ENCODE measurements at regions of chr13 and their contacts with region 1.

Region 1: GRCh38 chr13:74040200-74040599 is 94.0 kb downstream of the KLF12 start:
- DNase-seq: peak in 7 of 14 experiments; percentile 5 to 43 (median 17)
- ATAC-seq: peak; percentile 60
- H3K4me3 ChIP-seq: no peak overlapping the region
- H3K4me3 Mint-ChIP-seq: no peak overlapping the region
- H3K27ac ChIP-seq: no peak overlapping the region
- H3K27ac Mint-ChIP-seq: peak overlapping the region; percentile 38
- H3K4me1 ChIP-seq: peaks cover 22% of the 10 kb centered on the region
- H3K4me1 Mint-ChIP-seq: peaks cover 92% of the 10 kb centered on the region
- H3K27me3 ChIP-seq: no peaks in the 10 kb centered on the region
- H3K27me3 Mint-ChIP-seq: no peaks in the 10 kb centered on the region
- CTCF ChIP-seq: peak; percentile 6

Region 2: DNA sequence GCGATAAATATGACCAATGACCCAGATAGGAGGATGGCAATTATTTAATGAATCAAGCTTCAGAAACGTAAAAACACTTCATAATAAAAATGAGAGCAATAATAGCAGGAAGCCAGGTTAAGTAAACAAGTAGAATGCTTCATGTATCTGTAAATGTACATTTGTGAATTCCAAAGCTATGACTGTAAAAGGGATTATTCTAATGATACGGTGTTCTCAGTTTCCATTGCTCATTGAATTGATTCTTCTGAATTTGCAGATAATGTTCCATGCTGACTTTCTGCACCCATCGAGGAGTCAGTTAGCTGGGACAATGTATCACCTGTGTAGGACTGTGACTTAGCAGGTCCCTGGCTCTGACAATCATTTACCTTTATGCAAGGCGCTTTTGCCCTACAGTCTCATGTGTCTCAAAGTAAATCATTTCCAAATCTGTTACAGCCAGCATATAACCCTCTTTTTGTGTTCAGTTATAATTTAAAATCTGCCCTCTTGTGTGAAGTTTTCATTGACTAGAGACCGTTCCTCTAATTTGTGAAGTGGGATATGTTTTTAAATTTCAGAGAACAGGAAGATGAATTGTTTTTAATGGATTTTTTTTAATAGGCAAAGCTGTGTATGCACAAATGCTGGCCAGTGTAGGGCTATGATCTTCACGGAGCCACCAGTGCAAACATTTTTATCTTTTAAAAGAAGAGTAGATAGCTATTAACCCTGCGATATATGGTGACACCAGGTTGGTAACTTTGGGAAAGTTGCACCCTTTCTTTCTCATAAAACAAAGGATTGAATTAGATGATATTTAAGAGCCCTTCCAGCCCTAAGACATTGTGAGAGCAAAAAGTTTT is 714.3 kb before region 1 on chr13:
- CTCF ChIA-PET with region 1: no interaction called
- POLR2A ChIA-PET with region 1: no interaction called
- intact Hi-C with region 1: no loop called
- DNase-seq: no peak
- ATAC-seq: no peak
- H3K4me3 ChIP-seq: no peak overlapping the region
- H3K4me3 Mint-ChIP-seq: no peak overlapping the region
- H3K27ac ChIP-seq: no peak overlapping the region
- H3K27ac Mint-ChIP-seq: no peak overlapping the region
- H3K4me1 ChIP-seq: no peaks in the 10 kb centered on the region
- H3K4me1 Mint-ChIP-seq: no peaks in the 10 kb centered on the region
- H3K27me3 ChIP-seq: no peaks in the 10 kb centered on the region
- H3K27me3 Mint-ChIP-seq: peaks cover 8% of the 10 kb centered on the region
- CTCF ChIP-seq: no peak

Region 3: GRCh38 chr13:74026753-74027152 is 13.4 kb before region 1 on chr13:
- CTCF ChIA-PET with region 1: interaction called, 3 read pairs
- POLR2A ChIA-PET with region 1: interaction called, 11 read pairs
- intact Hi-C with region 1: no loop called
- DNase-seq: peak; percentile 44 to 88 (median 66)
- ATAC-seq: peak; percentile 95
- H3K4me3 ChIP-seq: peak overlapping the region; percentile 29
- H3K4me3 Mint-ChIP-seq: peak overlapping the region; percentile 82
- H3K27ac ChIP-seq: peak overlapping the region; percentile 66 to 78
- H3K27ac Mint-ChIP-seq: peak overlapping the region; percentile 89
- H3K4me1 ChIP-seq: peaks cover 11% of the 10 kb centered on the region
- H3K4me1 Mint-ChIP-seq: peaks cover 90% of the 10 kb centered on the region
- H3K27me3 ChIP-seq: no peaks in the 10 kb centered on the region
- H3K27me3 Mint-ChIP-seq: no peaks in the 10 kb centered on the region
- CTCF ChIP-seq: no peak